Natural killer cell (primary cell): ENCODE measurements at regions of chr10 and their contacts with region 1.

Region 1: DNA sequence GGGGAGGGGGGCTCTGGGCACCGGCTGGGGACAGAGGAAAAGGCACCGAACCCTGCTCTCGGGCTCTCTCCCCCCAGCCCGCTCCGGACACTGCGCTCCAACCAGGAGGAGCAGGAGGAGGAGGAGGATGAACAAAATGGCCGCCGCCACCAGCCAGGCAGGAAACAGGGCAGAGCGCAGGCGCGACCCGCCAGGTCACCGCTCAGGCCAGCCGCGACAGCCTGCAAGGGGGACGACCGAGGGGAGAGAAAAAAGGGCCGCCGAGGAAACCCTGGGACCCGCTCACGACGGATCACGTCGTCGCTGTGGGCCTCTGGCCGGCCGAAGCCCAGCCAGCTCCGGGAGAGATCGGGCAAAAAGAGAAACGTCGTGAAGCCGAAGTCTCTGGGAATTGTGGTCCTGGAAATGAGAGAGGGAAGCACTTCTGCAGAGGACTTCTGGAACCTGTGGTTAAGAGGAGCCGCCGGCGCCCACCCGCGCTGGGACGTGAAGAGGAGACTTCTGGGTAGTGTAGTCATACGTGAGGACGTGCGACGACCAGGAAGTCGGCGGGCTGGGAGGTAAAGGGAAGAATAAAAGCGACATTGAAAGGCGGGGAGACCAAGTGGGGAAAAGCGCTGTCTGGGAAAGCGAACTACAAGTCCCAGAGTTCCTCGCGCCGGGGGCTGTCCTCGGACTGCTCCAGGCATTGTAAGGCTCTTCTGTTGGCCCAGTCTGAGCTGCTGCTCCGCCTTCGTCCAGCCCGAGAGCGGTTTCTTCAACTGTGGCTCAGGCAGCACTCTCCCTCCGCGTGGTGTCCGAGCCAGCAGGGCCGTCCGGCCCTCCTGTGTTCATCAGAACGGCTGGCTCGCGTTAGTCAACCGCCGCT is at the start of gene TIAL1:
- DNase-seq: peak; percentile 89 to 97
- ATAC-seq: peak; percentile 75 to 91 (median 82)
- H3K4me3 ChIP-seq: peak within 1 kb of the TSS; percentile 81
- H3K4me3 Mint-ChIP-seq: peak within 1 kb of the TSS; percentile 99
- H3K27ac ChIP-seq: peak within 1 kb of the TSS; percentile 88
- H3K27ac Mint-ChIP-seq: peak within 1 kb of the TSS; percentile 92 to 99
- H3K4me1 ChIP-seq: peaks cover 17% of the 10 kb centered on the region
- H3K4me1 Mint-ChIP-seq: peaks cover 55 to 57% of the 10 kb centered on the region in 2 donors
- H3K27me3 ChIP-seq: no peaks in the 10 kb centered on the region
- H3K27me3 Mint-ChIP-seq: no peaks in the 10 kb centered on the region
- CTCF ChIP-seq: no peak
- total RNA-seq, gene TIAL1: 195 to 227 (median 213) TPM

Region 2: DNA sequence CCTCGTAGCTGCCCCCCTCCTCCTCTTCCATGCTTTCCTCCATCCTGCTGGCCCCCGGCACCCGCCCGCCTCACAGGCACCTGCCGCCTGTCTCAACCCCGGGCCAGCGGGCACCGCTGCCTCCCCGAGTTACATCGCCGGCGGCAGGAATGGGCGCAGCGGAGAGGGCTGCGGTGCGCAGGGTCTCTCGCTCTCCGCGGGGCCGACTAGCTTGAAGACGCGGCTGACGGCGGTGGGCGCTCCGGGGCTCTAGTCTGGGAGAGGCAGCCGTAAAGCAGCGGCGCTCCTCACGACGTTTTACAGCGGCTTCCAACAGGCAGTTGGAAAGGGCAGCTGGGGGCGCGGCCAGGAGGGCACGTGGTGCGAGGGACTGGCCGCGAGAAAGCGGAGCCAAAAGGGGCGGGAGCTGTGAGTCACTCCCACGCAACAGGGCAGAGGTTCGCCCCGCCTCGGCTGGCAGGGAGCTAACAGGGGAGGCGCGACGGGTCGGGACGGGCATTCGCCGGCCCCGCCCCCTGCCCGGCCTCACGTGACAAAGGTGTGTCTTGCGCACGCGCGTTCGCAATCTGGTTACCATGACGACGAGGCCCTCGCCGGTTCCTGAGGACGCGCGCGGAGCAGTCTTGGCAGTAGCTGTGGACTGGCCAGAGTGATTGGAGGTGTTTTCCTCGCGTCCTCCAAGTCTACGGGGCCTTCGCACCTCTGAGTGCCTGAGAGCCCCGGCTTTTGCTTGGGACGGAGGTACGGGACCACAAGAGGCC is 841.9 kb before region 1 on chr10 and contains the start of gene CACUL1:
- intact Hi-C with region 1: loop called (anchors 10 kb)
- DNase-seq: peak; percentile 99 to 100
- ATAC-seq: peak; percentile 95 to 99 (median 97)
- H3K4me3 ChIP-seq: peak within 1 kb of the TSS; percentile 97
- H3K4me3 Mint-ChIP-seq: peak within 1 kb of the TSS; percentile 92
- H3K27ac ChIP-seq: peak within 1 kb of the TSS; percentile 91
- H3K27ac Mint-ChIP-seq: peak within 1 kb of the TSS; percentile 92 to 95
- H3K4me1 ChIP-seq: peaks cover 19% of the 10 kb centered on the region
- H3K4me1 Mint-ChIP-seq: peaks cover 32 to 39% of the 10 kb centered on the region in 2 donors
- H3K27me3 ChIP-seq: peaks cover 5% of the 10 kb centered on the region
- H3K27me3 Mint-ChIP-seq: peaks cover 0 to 7% of the 10 kb centered on the region in 2 donors
- CTCF ChIP-seq: no peak
- total RNA-seq, gene CACUL1: 45.4 to 65.9 (median 47.6) TPM

Region 3: GRCh38 chr10:119395280-119395989 is 201.3 kb before region 1 on chr10:
- intact Hi-C with region 1: no loop called
- DNase-seq: no peak
- ATAC-seq: peak; percentile 46 to 64 (median 57)
- H3K4me3 ChIP-seq: no peak overlapping the region
- H3K4me3 Mint-ChIP-seq: no peak overlapping the region
- H3K27ac ChIP-seq: peak overlapping the region; percentile 49
- H3K27ac Mint-ChIP-seq: peak overlapping the region; percentile 49 to 88
- H3K4me1 ChIP-seq: peaks cover 31% of the 10 kb centered on the region
- H3K4me1 Mint-ChIP-seq: peaks cover 20 to 50% of the 10 kb centered on the region in 2 donors
- H3K27me3 ChIP-seq: no peaks in the 10 kb centered on the region
- H3K27me3 Mint-ChIP-seq: no peaks in the 10 kb centered on the region
- CTCF ChIP-seq: no peak

Region 4: GRCh38 chr10:119575506-119575905 is 21.3 kb before region 1 on chr10:
- intact Hi-C with region 1: no loop called
- DNase-seq: peak in 1 of 2 donors; percentile 79
- ATAC-seq: peak; percentile 84 to 92 (median 88)
- H3K4me3 ChIP-seq: no peak overlapping the region
- H3K4me3 Mint-ChIP-seq: peak overlapping the region; percentile 72
- H3K27ac ChIP-seq: peak overlapping the region; percentile 52
- H3K27ac Mint-ChIP-seq: peak overlapping the region; percentile 85 to 92
- H3K4me1 ChIP-seq: peaks cover 3% of the 10 kb centered on the region
- H3K4me1 Mint-ChIP-seq: peaks cover 17 to 27% of the 10 kb centered on the region in 2 donors
- H3K27me3 ChIP-seq: no peaks in the 10 kb centered on the region
- H3K27me3 Mint-ChIP-seq: no peaks in the 10 kb centered on the region
- CTCF ChIP-seq: no peak

Region 5: DNA sequence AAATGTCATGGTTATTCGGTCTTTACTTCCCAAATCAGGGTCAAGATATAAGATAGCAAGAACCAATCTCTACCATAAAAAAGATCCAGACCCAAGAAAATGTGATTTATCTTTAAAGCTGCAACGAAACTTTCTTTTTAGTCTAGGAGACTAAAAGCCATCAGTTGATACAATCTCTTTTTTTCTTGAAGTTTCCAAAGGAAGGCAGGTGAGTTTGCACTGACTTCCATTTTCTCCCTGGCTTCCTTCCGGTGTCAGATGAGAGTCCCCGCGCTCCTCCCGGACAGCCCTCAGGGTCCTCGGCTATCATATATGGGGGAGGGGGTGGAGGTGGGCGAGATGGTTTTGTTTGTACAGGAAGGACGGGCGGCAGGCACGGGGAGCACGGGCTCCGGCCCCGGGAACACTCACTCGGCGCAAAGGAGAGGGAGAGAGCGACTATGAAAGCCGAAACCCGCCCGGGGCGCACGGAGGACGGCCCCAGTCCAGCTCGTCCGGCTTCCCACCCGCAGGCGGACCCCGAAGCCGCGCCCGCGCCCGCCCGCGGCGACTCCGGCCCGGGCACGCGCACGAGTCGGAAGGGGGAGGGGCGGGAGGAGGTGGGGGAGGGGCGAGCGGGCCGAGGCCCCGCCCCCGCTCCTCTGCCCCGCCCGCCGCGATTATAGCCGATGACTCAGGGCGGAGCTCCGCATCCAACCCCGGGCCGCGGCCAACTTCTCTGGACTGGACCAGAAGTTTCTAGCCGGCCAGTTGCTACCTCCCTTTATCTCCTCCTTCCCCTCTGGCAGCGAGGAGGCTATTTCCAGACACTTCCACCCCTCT is 54.1 kb after region 1 on chr10 and contains the start of gene BAG3:
- intact Hi-C with region 1: loop called (anchors 1 kb)
- DNase-seq: peak; percentile 70 to 85
- ATAC-seq: peak; percentile 93 to 96 (median 94)
- H3K4me3 ChIP-seq: peak within 1 kb of the TSS; percentile 84
- H3K4me3 Mint-ChIP-seq: peak within 1 kb of the TSS; percentile 92
- H3K27ac ChIP-seq: peak within 1 kb of the TSS; percentile 70
- H3K27ac Mint-ChIP-seq: peak within 1 kb of the TSS; percentile 78 to 88
- H3K4me1 ChIP-seq: peaks cover 3% of the 10 kb centered on the region
- H3K4me1 Mint-ChIP-seq: peaks cover 23 to 27% of the 10 kb centered on the region in 2 donors
- H3K27me3 ChIP-seq: no peaks in the 10 kb centered on the region
- H3K27me3 Mint-ChIP-seq: no peaks in the 10 kb centered on the region
- CTCF ChIP-seq: no peak
- total RNA-seq, gene BAG3: 7.6 to 9.7 (median 8.3) TPM

Region 6: DNA sequence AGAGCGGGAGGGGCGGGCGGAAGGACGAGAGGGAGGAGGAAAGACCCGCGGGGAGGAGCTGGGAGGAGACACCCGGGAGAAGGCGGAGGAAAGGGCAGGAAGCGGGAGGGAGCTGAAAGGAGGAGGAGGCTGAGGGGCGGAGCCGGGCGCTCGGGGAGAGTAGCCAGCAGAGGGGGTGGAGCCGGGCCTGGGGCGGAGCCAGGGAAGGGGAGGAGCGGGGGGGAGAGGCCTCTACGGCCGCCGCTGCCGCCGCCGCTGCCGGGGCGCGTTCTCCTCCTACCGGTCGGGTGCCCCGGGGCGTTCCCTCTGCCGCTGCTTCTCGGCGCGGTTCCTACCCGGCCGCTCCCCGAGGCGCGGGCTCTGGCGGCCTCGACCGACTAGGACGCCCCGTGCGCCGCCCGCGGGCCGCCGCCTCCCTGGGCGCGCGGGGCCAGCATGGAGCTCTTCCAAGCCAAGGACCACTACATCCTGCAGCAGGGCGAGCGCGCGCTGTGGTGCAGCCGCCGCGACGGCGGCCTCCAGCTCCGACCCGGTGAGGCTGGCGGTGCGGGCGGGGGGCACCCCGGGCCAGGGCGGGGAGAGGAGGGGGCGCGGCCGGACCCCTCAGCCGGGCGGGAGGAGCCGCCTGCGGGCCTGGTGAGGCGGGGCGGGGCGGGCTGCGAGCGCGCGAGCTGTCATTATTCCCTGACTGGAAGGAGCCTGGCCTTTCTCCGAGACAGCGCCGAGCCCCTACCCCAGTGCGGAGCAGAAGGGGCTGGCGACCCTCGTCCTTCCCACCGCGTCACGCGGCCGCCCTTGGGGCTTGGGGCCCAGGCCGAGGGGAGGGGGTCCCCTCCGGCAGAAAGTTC is 129.3 kb after region 1 on chr10 and contains the start of gene INPP5F:
- intact Hi-C with region 1: loop called (anchors 5 kb)
- DNase-seq: peak; percentile 91 to 98
- ATAC-seq: peak; percentile 93 to 98 (median 94)
- H3K4me3 ChIP-seq: peak within 1 kb of the TSS; percentile 45
- H3K4me3 Mint-ChIP-seq: peak within 1 kb of the TSS; percentile 92
- H3K27ac ChIP-seq: peak within 1 kb of the TSS; percentile 84
- H3K27ac Mint-ChIP-seq: peak within 1 kb of the TSS; percentile 24 to 80
- H3K4me1 ChIP-seq: peaks cover 18% of the 10 kb centered on the region
- H3K4me1 Mint-ChIP-seq: peaks cover 30 to 34% of the 10 kb centered on the region in 2 donors
- H3K27me3 ChIP-seq: no peaks in the 10 kb centered on the region
- H3K27me3 Mint-ChIP-seq: no peaks in the 10 kb centered on the region
- CTCF ChIP-seq: peak; percentile 17
- total RNA-seq, gene INPP5F: 12.8 to 18.2 (median 15.8) TPM

Region 7: GRCh38 chr10:119872860-119873681 is 276.3 kb after region 1 on chr10:
- intact Hi-C with region 1: loop called (anchors 2 kb)
- DNase-seq: peak; percentile 83 to 96
- ATAC-seq: peak; percentile 92 to 98 (median 94)
- H3K4me3 ChIP-seq: peak overlapping the region; percentile 72
- H3K4me3 Mint-ChIP-seq: peak overlapping the region; percentile 92
- H3K27ac ChIP-seq: peak overlapping the region; percentile 65
- H3K27ac Mint-ChIP-seq: peak overlapping the region; percentile 83 to 91
- H3K4me1 ChIP-seq: peaks cover 17% of the 10 kb centered on the region
- H3K4me1 Mint-ChIP-seq: peaks cover 32 to 38% of the 10 kb centered on the region in 2 donors
- H3K27me3 ChIP-seq: no peaks in the 10 kb centered on the region
- H3K27me3 Mint-ChIP-seq: no peaks in the 10 kb centered on the region
- CTCF ChIP-seq: no peak

Region 8: GRCh38 chr10:120328647-120329046 is 731.9 kb after region 1 on chr10:
- intact Hi-C with region 1: no loop called
- DNase-seq: no peak
- ATAC-seq: no peak
- H3K4me3 ChIP-seq: no peak overlapping the region
- H3K4me3 Mint-ChIP-seq: no peak overlapping the region
- H3K27ac ChIP-seq: no peak overlapping the region
- H3K27ac Mint-ChIP-seq: no peak overlapping the region
- H3K4me1 ChIP-seq: no peaks in the 10 kb centered on the region
- H3K4me1 Mint-ChIP-seq: no peaks in the 10 kb centered on the region
- H3K27me3 ChIP-seq: no peaks in the 10 kb centered on the region
- H3K27me3 Mint-ChIP-seq: peaks cover 8 to 11% of the 10 kb centered on the region in 2 donors
- CTCF ChIP-seq: no peak